K562 (cell line): ENCODE measurements at regions of chr16 and their contacts with region 1.

Region 1: DNA sequence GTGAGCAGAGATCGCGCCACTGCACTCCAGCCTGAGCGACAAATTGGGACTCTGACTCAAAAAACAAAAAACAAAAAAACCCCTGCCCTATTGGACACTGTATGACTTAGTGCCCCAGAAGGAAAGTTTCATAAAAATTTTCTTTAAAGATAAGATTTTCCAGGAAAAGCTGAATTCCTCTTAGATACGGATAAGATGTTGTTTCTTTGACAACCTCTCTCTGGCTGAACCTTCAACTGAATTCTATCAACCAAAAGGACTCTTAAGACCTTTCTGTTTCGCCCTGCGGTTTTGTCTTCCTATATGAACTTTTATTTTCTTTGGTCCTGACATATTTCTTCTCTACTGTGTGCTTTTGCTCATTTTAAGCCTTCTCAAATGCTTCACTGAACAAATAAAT is 35.8 kb downstream of the CPPED1 start:
- DNase-seq: peak in 1 of 4 experiments; percentile 45
- ATAC-seq: peak; percentile 49
- H3K4me3 ChIP-seq: no peak overlapping the region
- H3K27ac ChIP-seq: peak overlapping the region; percentile 65; the same call in 2 of the 3 replicates
- H3K4me1 ChIP-seq: peaks cover 13 to 24% of the 10 kb centered on the region in 2 experiments; a peak in 4 of 5 replicates
- H3K27me3 ChIP-seq: no peaks in the 10 kb centered on the region
- CTCF ChIP-seq: no peak
- EP300 ChIP-seq: peak; percentile 20; the same call in 1 of the 2 replicates
- POLR2A ChIP-seq: no peak
- RAD21 ChIP-seq: no peak

Region 2: GRCh38 chr16:12558641-12559040 is 209.3 kb before region 1 on chr16:
- CTCF ChIA-PET with region 1: no interaction called
- POLR2A ChIA-PET with region 1: no interaction called
- in situ Hi-C with region 1: no loop called
- intact Hi-C with region 1: no loop called
- DNase-seq: peak in 1 of 4 experiments; percentile 14
- ATAC-seq: peak; percentile 43; the same call in 1 of the 3 replicates
- H3K4me3 ChIP-seq: no peak overlapping the region
- H3K27ac ChIP-seq: no peak overlapping the region
- H3K4me1 ChIP-seq: no peaks in the 10 kb centered on the region; a peak in 1 of 5 replicates
- H3K27me3 ChIP-seq: peaks cover 6 to 33% of the 10 kb centered on the region in 2 experiments; a peak in 3 of 5 replicates
- CTCF ChIP-seq: peak in 2 of 3 experiments; percentile 4 to 12; a peak in 1 of 6 replicates
- EP300 ChIP-seq: no peak
- POLR2A ChIP-seq: no peak
- RAD21 ChIP-seq: peak in 1 of 2 experiments; percentile 52; a peak in 2 of 4 replicates

Region 3: DNA sequence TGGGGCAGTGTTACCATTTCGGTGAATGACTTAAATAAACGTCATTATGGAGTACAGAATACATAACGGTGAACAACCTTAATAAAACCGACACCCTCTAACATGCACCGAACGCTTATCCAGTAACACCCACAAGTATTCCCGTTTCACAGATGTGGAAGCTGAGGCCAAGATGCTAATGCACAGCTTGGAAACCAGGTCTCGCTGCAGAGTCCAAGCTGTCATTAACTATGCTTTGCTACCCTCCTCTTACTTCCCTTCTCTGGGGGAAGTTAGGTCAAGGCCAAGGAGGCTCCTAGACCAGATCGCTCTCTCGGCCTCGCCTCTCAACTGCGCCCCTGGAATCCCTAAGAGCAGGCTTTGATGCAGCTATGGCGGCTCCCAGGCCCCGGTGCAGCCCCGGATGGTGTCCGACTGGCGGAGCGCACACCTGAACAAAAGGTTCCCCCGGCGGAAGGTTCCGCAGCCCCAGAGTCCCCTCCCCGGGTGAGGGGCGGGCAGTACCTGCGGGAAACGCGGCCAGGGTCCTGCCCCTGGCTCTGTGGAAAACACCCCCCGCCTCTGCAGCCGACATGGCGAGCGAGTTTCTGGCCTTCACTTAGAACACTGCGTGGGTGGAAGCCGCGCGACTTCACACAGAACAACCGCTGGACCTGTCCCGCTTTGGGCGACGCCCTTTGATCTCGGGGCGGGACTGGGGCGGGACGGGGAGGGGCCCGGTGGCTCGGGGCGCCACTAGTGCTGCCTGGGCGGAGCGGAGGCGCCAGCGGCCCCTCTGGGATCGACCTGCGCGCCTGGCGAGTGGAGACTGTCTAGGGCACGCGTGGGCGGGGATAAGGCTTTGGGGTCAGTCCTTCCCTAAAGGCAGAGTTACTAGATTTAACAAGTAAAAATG is 35.6 kb after region 1 on chr16 and contains the start of gene CPPED1:
- CTCF ChIA-PET with region 1: no interaction called
- POLR2A ChIA-PET with region 1: no interaction called
- in situ Hi-C with region 1: no loop called
- intact Hi-C with region 1: loop called (anchors 5 kb)
- DNase-seq: peak; percentile 96 to 98 (median 96)
- ATAC-seq: peak; percentile 92
- H3K4me3 ChIP-seq: peak within 1 kb of the TSS; percentile 66
- H3K27ac ChIP-seq: peak within 1 kb of the TSS; percentile 89
- H3K4me1 ChIP-seq: peaks cover 14 to 26% of the 10 kb centered on the region in 2 experiments; a peak in 3 of 5 replicates
- H3K27me3 ChIP-seq: no peaks in the 10 kb centered on the region
- CTCF ChIP-seq: no peak
- EP300 ChIP-seq: peak; percentile 21; the same call in 1 of the 2 replicates
- POLR2A ChIP-seq: peak; percentile 90
- RAD21 ChIP-seq: no peak; a peak in 1 of 4 replicates
- polyA plus RNA-seq, gene CPPED1: 11.4 to 13.6 TPM